ENCODE measurements at regions of chr19 and their contacts with region 1.

Region 1: GRCh38 chr19:51473009-51473707 is 5.2 kb upstream of the CEACAM18 start:
- DNase-seq: peak; percentile 69 to 83 (median 77)
- ATAC-seq: peak; percentile 73 to 84
- H3K4me3 ChIP-seq: no peak overlapping the region
- H3K27ac ChIP-seq: no peak overlapping the region
- H3K4me1 ChIP-seq: no peaks in the 10 kb centered on the region
- H3K27me3 ChIP-seq: no peaks in the 10 kb centered on the region

Region 2: GRCh38 chr19:51651216-51651846 is 178.2 kb after region 1 on chr19:
- intact Hi-C with region 1: loop called in 3 of 4 experiments (anchors 5 kb)
- DNase-seq: peak in 1 of 3 donors; percentile 63
- ATAC-seq: peak; percentile 52 to 54
- H3K4me3 ChIP-seq: no peak overlapping the region
- H3K27ac ChIP-seq: no peak overlapping the region
- H3K4me1 ChIP-seq: no peaks in the 10 kb centered on the region
- H3K27me3 ChIP-seq: no peaks in the 10 kb centered on the region

Region 3: GRCh38 chr19:51807111-51807701 is 334.0 kb after region 1 on chr19:
- intact Hi-C with region 1: loop called in 1 of 4 experiments (anchors 10 kb)
- DNase-seq: peak in 2 of 3 donors; percentile 71 to 74
- ATAC-seq: peak in 1 of 2 donors; percentile 35
- H3K4me3 ChIP-seq: no peak overlapping the region
- H3K27ac ChIP-seq: no peak overlapping the region
- H3K4me1 ChIP-seq: no peaks in the 10 kb centered on the region
- H3K27me3 ChIP-seq: no peaks in the 10 kb centered on the region